Left ventricle myocardium inferior (tissue), 1 donor: ENCODE measurements at regions of chr7 and their contacts with region 1.

Region 1: GRCh38 chr7:77651573-77652162 is 44.6 kb upstream of the RSBN1L start:
- DNase-seq: no peak
- H3K4me3 ChIP-seq: no peak overlapping the region
- H3K27ac ChIP-seq: no peak overlapping the region
- H3K4me1 ChIP-seq: peaks cover 8% of the 10 kb centered on the region
- H3K27me3 ChIP-seq: no peaks in the 10 kb centered on the region
- CTCF ChIP-seq: peak; percentile 78

Region 2: DNA sequence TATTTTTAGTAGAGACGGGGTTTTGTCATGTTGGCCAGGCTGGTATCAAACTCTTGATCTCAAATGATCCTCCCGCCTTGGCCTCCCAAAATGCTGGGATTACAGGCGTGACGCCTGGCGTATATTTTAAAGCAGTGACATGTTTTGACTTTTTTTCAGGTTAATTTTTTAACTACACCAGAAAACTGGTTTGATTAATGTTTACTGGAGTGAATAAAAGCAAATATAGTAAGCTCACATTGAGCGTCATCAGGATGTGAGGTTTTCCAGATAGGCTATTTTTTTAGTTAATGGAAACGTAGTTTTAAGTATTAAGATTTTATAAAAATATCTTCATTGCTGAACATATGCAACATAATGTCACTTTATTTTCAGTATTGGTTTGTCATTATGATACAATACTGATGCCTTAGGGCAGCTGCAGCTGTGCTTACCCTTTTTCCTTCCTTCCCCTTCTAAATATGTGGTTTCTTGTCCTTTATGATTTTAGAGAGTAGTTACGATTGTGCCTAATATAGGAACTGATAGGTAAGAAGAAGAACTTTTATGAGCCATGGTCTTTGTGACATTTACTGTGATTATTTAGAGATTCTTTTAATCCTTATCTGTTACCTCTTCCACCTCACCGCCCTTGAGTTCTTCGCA is 109.3 kb after region 1 on chr7:
- intact Hi-C with region 1: loop called (anchors 5 kb)
- DNase-seq: no peak
- H3K4me3 ChIP-seq: no peak overlapping the region
- H3K27ac ChIP-seq: no peak overlapping the region
- H3K4me1 ChIP-seq: peaks cover 41% of the 10 kb centered on the region
- H3K27me3 ChIP-seq: no peaks in the 10 kb centered on the region
- CTCF ChIP-seq: no peak